Breast epithelium (tissue), 4 donors: ENCODE measurements at regions of chr17 and their contacts with region 1.

Region 1: DNA sequence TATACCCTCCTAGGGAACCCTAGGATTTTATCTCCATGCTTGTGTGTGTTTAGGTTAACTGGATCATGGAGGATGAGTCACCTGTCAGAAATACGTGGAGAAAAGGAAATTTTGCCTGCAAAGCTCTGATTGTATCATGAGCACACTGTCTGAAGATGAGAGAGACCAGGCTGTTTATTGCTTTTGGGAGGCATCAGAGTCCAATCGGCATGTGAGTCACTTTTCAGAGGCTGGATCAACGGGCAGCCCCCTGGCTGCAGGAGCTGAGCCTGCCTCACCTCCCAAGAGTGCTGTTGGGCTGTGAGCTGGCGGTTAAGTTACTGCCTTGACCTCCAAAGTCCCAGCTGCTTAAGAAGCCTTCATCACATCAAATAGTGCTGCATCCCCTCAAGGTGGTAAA is 41.5 kb upstream of the MED9 start:
- DNase-seq: no peak
- H3K4me3 ChIP-seq: no peak overlapping the region
- H3K27ac ChIP-seq: no peak overlapping the region
- H3K4me1 ChIP-seq: no peaks in the 10 kb centered on the region
- H3K27me3 ChIP-seq: no peaks in the 10 kb centered on the region
- CTCF ChIP-seq: no peak
- POLR2A ChIP-seq: no peak

Region 2: GRCh38 chr17:15944759-15945529 is 1490.4 kb before region 1 on chr17 and contains the start of gene ADORA2B:
- intact Hi-C with region 1: no loop called
- DNase-seq: no peak
- H3K4me3 ChIP-seq: peak within 1 kb of the TSS; percentile 54 to 77 (median 57)
- H3K27ac ChIP-seq: peak within 1 kb of the TSS in 1 of 2 donors; percentile 22
- H3K4me1 ChIP-seq: no peaks in the 10 kb centered on the region
- H3K27me3 ChIP-seq: no peaks in the 10 kb centered on the region
- CTCF ChIP-seq: peak in 1 of 3 donors; percentile 35
- POLR2A ChIP-seq: no peak
- total RNA-seq, gene ADORA2B: 0.48 to 5.6 (median 4.9) TPM

Region 3: DNA sequence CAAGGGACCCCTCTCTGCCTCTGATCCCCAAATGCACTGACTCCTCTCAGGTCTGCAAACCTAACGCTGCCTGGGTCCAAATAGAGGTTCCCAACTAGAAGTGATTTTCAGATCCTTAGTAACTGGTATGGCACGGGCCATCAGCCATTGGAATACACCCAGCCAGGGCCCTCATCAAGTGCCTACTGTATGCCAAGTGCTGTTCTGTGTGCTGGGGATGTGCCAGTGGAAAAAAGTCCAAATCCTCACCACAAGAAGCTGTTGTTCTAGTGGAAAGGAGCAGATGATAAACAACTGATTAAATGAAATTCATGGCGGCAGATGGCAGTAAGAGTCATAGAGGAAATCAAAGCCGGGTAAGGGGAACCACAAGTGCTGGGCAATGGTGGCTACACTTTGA is 15.7 kb before region 1 on chr17:
- intact Hi-C with region 1: loop called (anchors 2 kb)
- DNase-seq: no peak
- H3K4me3 ChIP-seq: peak overlapping the region in 1 of 3 donors; percentile 12
- H3K27ac ChIP-seq: peak overlapping the region; percentile 33 to 85
- H3K4me1 ChIP-seq: peaks cover 0 to 6% of the 10 kb centered on the region in 2 donors
- H3K27me3 ChIP-seq: no peaks in the 10 kb centered on the region
- CTCF ChIP-seq: no peak
- POLR2A ChIP-seq: no peak